ENCODE measurements at regions of chr1 and their contacts with region 1.

Region 1: DNA sequence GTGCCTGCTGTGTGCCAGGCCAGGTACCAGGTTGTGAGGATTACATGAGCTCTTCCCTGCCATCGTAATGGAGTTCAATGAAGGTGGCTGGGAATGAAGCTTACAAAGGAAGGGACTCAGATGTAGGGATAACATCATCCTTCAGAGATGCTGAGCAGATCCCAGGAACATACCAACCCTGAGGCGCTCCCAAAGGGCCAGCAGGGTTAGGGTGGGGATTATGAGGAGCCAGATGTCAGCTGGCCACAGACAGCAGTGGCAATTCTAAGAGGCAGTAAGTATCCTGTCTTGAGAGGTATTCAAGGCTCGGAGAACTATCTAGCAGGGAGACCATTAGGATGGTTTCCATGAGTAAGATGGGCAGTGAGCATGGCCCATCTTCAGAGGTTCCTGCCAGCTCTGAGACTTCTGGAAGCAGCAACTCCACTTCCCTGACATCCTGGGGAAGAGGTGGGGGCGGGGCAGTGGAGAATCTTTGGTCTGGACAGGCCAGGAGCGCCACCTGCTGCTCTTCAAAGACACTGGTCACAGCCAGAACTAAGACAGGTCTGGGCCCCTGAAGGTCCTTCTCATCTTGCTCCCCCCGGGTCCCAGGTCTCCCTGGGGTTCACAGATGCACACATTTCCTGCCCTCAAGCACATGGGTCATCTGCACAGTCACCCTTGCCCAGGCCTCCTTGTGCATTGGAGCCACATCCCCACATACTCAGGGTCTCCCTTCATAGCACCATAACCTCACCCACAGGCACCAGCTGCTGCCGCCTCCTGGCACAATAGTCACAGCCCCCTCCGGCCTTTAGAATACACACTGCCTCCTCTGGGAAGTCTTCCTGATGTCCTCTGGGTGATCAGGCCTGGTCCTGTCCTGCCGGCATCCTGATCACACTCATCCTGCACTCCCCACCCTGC is 2.7 kb upstream of the SDC3 start:
- DNase-seq: peak; percentile 96
- H3K4me3 ChIP-seq: no peak overlapping the region
- H3K27ac ChIP-seq: peak overlapping the region in 3 of 4 donors; percentile 85 to 89 (median 89)
- H3K4me1 ChIP-seq: peaks cover 2 to 40% (median 27%) of the 10 kb centered on the region in 4 donors
- H3K27me3 ChIP-seq: no peaks in the 10 kb centered on the region
- CTCF ChIP-seq: peak; percentile 83 to 90 (median 88)
- EP300 ChIP-seq: no peak
- POLR2A ChIP-seq: no peak

Region 2: GRCh38 chr1:30718636-30719405 is 192.5 kb before region 1 on chr1:
- intact Hi-C with region 1: loop called (anchors 1 kb)
- DNase-seq: peak; percentile 99
- H3K4me3 ChIP-seq: peak overlapping the region; percentile 29 to 63 (median 50)
- H3K27ac ChIP-seq: peak overlapping the region; percentile 98 to 99 (median 99)
- H3K4me1 ChIP-seq: peaks cover 0 to 14% (median 9%) of the 10 kb centered on the region in 4 donors
- H3K27me3 ChIP-seq: no peaks in the 10 kb centered on the region
- CTCF ChIP-seq: peak; percentile 99 to 100 (median 99)
- EP300 ChIP-seq: peak in 1 of 4 donors; percentile 40
- POLR2A ChIP-seq: peak; percentile 74 to 86

Region 3: DNA sequence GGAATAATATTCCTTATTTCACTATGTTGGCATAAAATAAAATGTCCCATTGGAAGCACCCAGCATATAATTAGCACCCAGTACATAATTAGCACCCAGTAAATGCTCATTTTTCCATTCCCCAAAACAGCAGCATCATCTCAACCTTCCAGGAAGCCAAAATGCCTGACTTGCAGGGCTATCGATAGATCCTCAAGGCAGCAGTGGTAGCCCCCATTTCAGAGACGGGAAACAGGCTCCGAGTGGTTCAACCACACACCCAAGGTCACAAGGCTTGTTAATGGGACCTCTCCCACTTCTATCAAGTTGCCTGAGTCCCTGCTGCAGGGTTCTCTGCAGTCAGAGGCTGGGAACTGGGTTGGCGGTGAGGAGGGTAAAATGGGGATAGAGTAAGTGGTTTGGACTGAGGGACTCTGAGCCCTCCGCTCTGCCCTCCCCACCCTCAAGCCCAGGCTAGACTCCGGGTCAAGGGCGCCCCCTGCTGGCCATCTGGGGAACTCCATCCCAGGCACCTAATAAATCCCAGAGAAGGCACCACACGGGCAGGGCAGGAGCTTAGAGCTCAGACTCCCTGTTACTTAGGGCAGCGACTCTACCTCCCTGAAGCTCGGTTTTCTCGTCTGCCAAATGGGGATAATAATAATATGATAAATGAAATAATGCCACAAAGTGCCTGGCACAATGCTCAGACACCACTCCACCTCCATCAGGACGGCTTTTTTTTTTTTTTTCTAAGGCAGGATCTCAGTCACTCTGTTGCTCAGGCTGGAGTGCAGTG is 131.8 kb before region 1 on chr1:
- intact Hi-C with region 1: loop called (anchors 1 kb)
- DNase-seq: peak; percentile 91
- H3K4me3 ChIP-seq: no peak overlapping the region
- H3K27ac ChIP-seq: no peak overlapping the region
- H3K4me1 ChIP-seq: peaks cover 0 to 7% (median 0%) of the 10 kb centered on the region in 4 donors
- H3K27me3 ChIP-seq: no peaks in the 10 kb centered on the region
- CTCF ChIP-seq: peak; percentile 89 to 99 (median 96)
- EP300 ChIP-seq: no peak
- POLR2A ChIP-seq: no peak

Region 4: DNA sequence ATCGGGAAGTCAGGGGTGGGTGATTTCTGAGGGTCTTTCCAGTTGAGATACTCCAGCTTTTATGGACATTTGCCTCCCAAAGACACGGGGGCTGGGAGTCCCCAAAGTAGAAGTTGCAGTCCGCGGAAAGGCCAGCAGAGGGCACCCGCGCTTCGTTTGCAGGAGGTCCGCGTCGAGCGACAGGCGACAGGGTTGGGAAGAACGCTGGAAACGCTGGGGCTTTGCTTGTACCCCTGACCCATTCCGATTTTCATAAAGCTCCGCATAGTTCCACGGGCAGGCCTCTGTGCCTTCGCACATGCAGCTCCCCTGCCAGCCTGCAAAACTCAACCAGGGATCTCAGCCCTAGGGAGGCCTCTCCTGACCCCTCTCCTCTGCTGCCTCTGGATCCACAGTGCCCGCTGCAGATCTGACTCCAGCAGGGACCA is 109.5 kb before region 1 on chr1:
- intact Hi-C with region 1: loop called (anchors 1 kb)
- DNase-seq: peak; percentile 90
- H3K4me3 ChIP-seq: peak overlapping the region in 2 of 4 donors; percentile 9 to 23
- H3K27ac ChIP-seq: peak overlapping the region in 3 of 4 donors; percentile 63 to 97 (median 68)
- H3K4me1 ChIP-seq: peaks cover 0 to 37% (median 23%) of the 10 kb centered on the region in 4 donors
- H3K27me3 ChIP-seq: no peaks in the 10 kb centered on the region
- CTCF ChIP-seq: peak; percentile 89 to 96 (median 95)
- EP300 ChIP-seq: no peak
- POLR2A ChIP-seq: no peak

Measured in sigmoid colon (tissue), 7 donors.